ENCODE measurements at regions of chr7 and their contacts with region 1.

Region 1: GRCh38 chr7:137898839-137899721 is 52.3 kb upstream of the DGKI start:
- DNase-seq: peak; percentile 86
- H3K4me3 Mint-ChIP-seq: no peak overlapping the region
- H3K27ac Mint-ChIP-seq: no peak overlapping the region
- H3K4me1 Mint-ChIP-seq: peaks cover 8% of the 10 kb centered on the region
- H3K27me3 Mint-ChIP-seq: no peaks in the 10 kb centered on the region
- CTCF ChIP-seq: peak; percentile 83

Region 2: DNA sequence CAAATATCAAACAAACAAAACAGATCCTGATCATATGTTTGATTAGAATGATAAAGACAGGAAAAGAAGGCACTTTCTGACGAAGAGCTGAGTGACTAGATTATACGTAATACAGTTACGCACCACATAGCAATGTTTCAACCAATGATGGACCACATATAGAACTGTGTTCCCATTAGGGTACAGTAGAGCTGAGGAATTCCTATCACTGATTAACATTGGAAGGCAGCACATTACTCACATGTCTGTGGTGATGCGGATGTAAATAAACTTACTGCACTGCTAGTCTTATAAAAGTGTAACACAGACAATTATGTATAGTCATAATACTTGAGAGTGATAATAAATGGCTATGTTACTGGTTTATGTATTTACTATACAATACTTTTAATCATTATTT is 653.9 kb before region 1 on chr7:
- CTCF ChIA-PET with region 1: no interaction called
- intact Hi-C with region 1: no loop called
- DNase-seq: no peak
- H3K4me3 Mint-ChIP-seq: no peak overlapping the region
- H3K27ac Mint-ChIP-seq: no peak overlapping the region
- H3K4me1 Mint-ChIP-seq: no peaks in the 10 kb centered on the region
- H3K27me3 Mint-ChIP-seq: no peaks in the 10 kb centered on the region
- CTCF ChIP-seq: no peak

Region 3: GRCh38 chr7:137606061-137606674 is 292.9 kb before region 1 on chr7:
- CTCF ChIA-PET with region 1: interaction called, 3 read pairs
- intact Hi-C with region 1: loop called (anchors 1 kb)
- DNase-seq: no peak
- H3K4me3 Mint-ChIP-seq: no peak overlapping the region
- H3K27ac Mint-ChIP-seq: no peak overlapping the region
- H3K4me1 Mint-ChIP-seq: no peaks in the 10 kb centered on the region
- H3K27me3 Mint-ChIP-seq: peaks cover 66% of the 10 kb centered on the region
- CTCF ChIP-seq: no peak

Region 4: GRCh38 chr7:137656227-137656849 is 242.7 kb before region 1 on chr7:
- CTCF ChIA-PET with region 1: interaction called, 3 read pairs
- intact Hi-C with region 1: loop called (anchors 1 kb)
- DNase-seq: peak; percentile 75
- H3K4me3 Mint-ChIP-seq: no peak overlapping the region
- H3K27ac Mint-ChIP-seq: no peak overlapping the region
- H3K4me1 Mint-ChIP-seq: no peaks in the 10 kb centered on the region
- H3K27me3 Mint-ChIP-seq: peaks cover 30% of the 10 kb centered on the region
- CTCF ChIP-seq: peak; percentile 71

Region 5: GRCh38 chr7:138008547-138009349 is 109.7 kb after region 1 on chr7:
- CTCF ChIA-PET with region 1: interaction called, 8 read pairs
- intact Hi-C with region 1: loop called (anchors 1 kb)
- DNase-seq: peak; percentile 40
- H3K4me3 Mint-ChIP-seq: no peak overlapping the region
- H3K27ac Mint-ChIP-seq: peak overlapping the region; percentile 54
- H3K4me1 Mint-ChIP-seq: peaks cover 9% of the 10 kb centered on the region
- H3K27me3 Mint-ChIP-seq: no peaks in the 10 kb centered on the region
- CTCF ChIP-seq: peak; percentile 73